B cell (primary cell): ENCODE measurements at regions of chr2 and their contacts with region 1.

Region 1: DNA sequence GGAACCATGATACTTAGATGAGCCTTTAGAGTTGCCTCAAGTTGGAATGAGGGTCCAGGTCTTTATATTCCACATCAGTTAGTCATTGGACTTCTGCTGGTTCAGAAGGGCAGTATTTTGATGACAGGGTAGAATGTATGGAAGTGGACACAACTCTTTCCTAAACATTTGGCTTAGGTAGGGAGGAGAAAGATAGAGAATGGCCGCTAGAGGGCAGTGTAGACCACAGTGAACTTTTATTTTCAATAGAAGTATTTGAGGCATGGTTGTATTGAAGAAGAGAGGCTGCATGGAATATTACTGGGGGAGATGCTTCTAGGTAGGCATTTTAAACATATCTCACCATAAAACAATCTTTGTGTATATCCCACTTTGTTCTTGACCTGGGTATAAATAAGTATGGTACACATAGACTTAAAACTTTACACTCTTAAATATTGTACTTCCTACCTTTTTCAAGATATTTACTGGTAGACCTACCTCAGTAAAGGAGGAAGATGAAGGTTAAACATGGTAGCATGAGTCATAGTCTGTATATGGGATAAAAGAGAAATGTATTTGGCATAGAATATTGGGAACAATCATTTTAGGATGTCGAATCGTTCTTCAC is 497.6 kb upstream of the FAM98A start:
- DNase-seq: peak; percentile 50
- ATAC-seq: peak; percentile 33
- H3K4me3 ChIP-seq: no peak overlapping the region
- H3K4me3 Mint-ChIP-seq: no peak overlapping the region
- H3K27ac ChIP-seq: no peak overlapping the region
- H3K27ac Mint-ChIP-seq: no peak overlapping the region
- H3K4me1 ChIP-seq: no peaks in the 10 kb centered on the region
- H3K4me1 Mint-ChIP-seq: peaks cover 2% of the 10 kb centered on the region
- H3K27me3 ChIP-seq: no peaks in the 10 kb centered on the region
- H3K27me3 Mint-ChIP-seq: no peaks in the 10 kb centered on the region
- CTCF ChIP-seq: peak; percentile 90

Region 2: DNA sequence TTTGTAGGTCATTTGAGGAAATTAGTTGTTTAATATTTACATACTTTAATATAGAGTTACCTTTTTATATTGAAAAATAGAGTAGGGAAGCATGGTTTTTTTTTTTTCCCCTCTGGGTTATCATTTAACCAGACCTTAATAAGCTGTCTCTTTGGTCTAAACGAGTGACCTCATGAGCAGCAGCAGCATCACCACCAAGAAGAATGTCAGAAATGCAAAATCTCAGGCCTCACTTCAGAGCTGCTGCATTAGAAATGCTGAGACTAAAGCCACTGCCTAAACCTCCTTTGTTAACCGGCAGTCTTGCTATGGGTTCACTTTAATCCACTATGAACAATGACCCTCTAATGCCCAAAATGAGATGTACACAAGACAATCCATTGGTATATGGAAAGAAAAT is 236.1 kb after region 1 on chr2:
- CTCF ChIA-PET with region 1: no interaction called
- POLR2A ChIA-PET with region 1: no interaction called
- intact Hi-C with region 1: no loop called
- DNase-seq: no peak
- ATAC-seq: no peak
- H3K4me3 ChIP-seq: no peak overlapping the region
- H3K4me3 Mint-ChIP-seq: no peak overlapping the region
- H3K27ac ChIP-seq: no peak overlapping the region
- H3K27ac Mint-ChIP-seq: no peak overlapping the region
- H3K4me1 ChIP-seq: no peaks in the 10 kb centered on the region
- H3K4me1 Mint-ChIP-seq: no peaks in the 10 kb centered on the region
- H3K27me3 ChIP-seq: no peaks in the 10 kb centered on the region
- H3K27me3 Mint-ChIP-seq: no peaks in the 10 kb centered on the region
- CTCF ChIP-seq: no peak

Region 3: DNA sequence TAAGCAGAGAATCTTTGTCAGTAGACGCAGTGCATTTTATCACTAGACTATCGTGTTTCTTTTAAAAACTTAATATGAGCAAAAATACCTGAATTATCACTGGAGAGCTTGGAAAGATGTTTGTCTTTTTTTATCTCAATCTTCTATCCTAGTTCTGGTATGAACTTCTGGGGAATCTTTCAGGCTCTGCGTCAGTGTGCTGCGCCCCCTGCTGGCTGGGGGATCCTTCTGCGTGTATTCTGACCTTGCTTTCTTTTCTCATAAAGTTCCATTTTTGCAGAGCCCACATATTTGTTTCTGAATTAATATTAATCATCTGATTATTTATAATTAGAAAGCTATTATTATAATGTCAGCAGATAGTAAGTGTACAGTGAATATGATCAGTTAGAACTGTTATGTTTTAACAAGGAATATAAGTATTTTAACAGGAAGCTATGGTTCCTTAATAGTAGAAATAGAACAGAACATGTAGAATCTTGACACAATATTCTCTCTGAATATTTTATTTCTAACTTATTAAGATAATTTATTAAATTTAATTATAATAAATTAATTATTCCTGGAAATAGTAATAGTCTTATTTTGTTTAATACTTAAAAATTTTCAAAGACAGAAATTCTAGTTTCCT is 1313.9 kb after region 1 on chr2:
- CTCF ChIA-PET with region 1: no interaction called
- POLR2A ChIA-PET with region 1: no interaction called
- intact Hi-C with region 1: loop called (anchors 5 kb)
- DNase-seq: peak; percentile 14
- ATAC-seq: no peak
- H3K4me3 ChIP-seq: no peak overlapping the region
- H3K4me3 Mint-ChIP-seq: no peak overlapping the region
- H3K27ac ChIP-seq: no peak overlapping the region
- H3K27ac Mint-ChIP-seq: no peak overlapping the region
- H3K4me1 ChIP-seq: no peaks in the 10 kb centered on the region
- H3K4me1 Mint-ChIP-seq: no peaks in the 10 kb centered on the region
- H3K27me3 ChIP-seq: no peaks in the 10 kb centered on the region
- H3K27me3 Mint-ChIP-seq: no peaks in the 10 kb centered on the region
- CTCF ChIP-seq: peak; percentile 73